Naive thymus-derived CD4-positive, alpha-beta T cell (primary cell): ENCODE measurements at regions of chr4 and their contacts with region 1.

Region 1: GRCh38 chr4:123767806-123768205 is 371.2 kb downstream of the SPRY1 start:
- DNase-seq: no peak
- ATAC-seq: no peak
- H3K4me3 ChIP-seq: no peak overlapping the region
- H3K4me3 Mint-ChIP-seq: no peak overlapping the region
- H3K27ac ChIP-seq: no peak overlapping the region
- H3K27ac Mint-ChIP-seq: no peak overlapping the region
- H3K4me1 ChIP-seq: no peaks in the 10 kb centered on the region
- H3K4me1 Mint-ChIP-seq: no peaks in the 10 kb centered on the region
- H3K27me3 ChIP-seq: no peaks in the 10 kb centered on the region
- H3K27me3 Mint-ChIP-seq: peaks cover 0 to 13% (median 1%) of the 10 kb centered on the region in 5 donors

Region 2: DNA sequence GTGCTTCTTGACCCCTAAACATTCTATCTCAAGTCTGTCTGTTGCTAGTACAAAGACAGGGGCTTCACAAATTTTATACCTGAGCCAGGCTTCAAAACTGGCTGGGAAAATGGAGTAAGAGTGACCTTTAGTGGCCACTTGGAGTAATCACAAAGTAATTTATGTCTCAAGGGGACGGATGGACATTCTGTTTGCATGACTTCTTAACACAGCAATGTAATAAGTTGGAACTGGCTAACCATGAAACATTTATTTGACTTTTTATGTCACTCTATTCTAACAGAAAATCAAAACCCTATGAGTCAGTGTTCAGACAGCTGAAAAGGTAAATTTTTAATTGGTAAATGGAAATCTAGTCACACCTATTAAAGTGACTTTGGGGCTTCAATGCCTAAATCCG is 344.1 kb after region 1 on chr4:
- CTCF ChIA-PET with region 1: no interaction called
- POLR2A ChIA-PET with region 1: no interaction called
- intact Hi-C with region 1: loop called in 1 of 2 experiments (anchors 10 kb)
- DNase-seq: no peak
- ATAC-seq: no peak
- H3K4me3 ChIP-seq: no peak overlapping the region
- H3K4me3 Mint-ChIP-seq: no peak overlapping the region
- H3K27ac ChIP-seq: no peak overlapping the region
- H3K27ac Mint-ChIP-seq: no peak overlapping the region
- H3K4me1 ChIP-seq: no peaks in the 10 kb centered on the region
- H3K4me1 Mint-ChIP-seq: no peaks in the 10 kb centered on the region
- H3K27me3 ChIP-seq: no peaks in the 10 kb centered on the region
- H3K27me3 Mint-ChIP-seq: no peaks in the 10 kb centered on the region